Activated naive CD4-positive, alpha-beta T cell treated with anti-CD3 and anti-CD28 coated beads for 36 hours (primary cell): ENCODE measurements at regions of chr7 and their contacts with region 1.

Region 1: DNA sequence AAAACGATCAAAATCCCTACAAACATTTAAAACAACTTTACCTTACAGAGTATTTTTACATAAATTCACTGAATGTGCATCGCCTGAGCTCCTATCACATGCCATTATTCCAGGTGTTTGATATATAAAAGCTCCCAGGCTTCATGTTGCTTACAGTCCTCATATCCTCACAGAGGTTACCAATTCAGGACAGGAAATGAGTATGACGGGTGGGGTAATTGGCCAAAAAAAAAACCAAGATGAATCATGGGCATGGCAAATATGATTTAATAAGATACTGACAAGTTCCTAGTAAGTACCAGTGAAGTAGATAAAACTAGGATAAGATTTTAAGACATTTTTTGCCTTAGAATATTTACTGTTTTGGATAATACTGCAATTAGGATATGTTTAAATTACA is 135.8 kb downstream of the KMT2E start:
- DNase-seq: no peak
- H3K4me3 Mint-ChIP-seq: no peak overlapping the region
- H3K27ac Mint-ChIP-seq: no peak overlapping the region
- H3K4me1 Mint-ChIP-seq: peaks cover 4% of the 10 kb centered on the region
- H3K27me3 Mint-ChIP-seq: no peaks in the 10 kb centered on the region

Region 2: GRCh38 chr7:105336009-105336408 is 186.2 kb after region 1 on chr7:
- CTCF ChIA-PET with region 1: interaction called, 7 read pairs
- intact Hi-C with region 1: loop called (anchors 1 kb)
- DNase-seq: no peak
- H3K4me3 Mint-ChIP-seq: no peak overlapping the region
- H3K27ac Mint-ChIP-seq: no peak overlapping the region
- H3K4me1 Mint-ChIP-seq: peaks cover 27% of the 10 kb centered on the region
- H3K27me3 Mint-ChIP-seq: no peaks in the 10 kb centered on the region

Region 3: GRCh38 chr7:105589356-105590077 is 439.7 kb after region 1 on chr7:
- CTCF ChIA-PET with region 1: no interaction called
- intact Hi-C with region 1: loop called (anchors 1 kb)
- DNase-seq: peak; percentile 82
- H3K4me3 Mint-ChIP-seq: no peak overlapping the region
- H3K27ac Mint-ChIP-seq: no peak overlapping the region
- H3K4me1 Mint-ChIP-seq: peaks cover 4% of the 10 kb centered on the region
- H3K27me3 Mint-ChIP-seq: no peaks in the 10 kb centered on the region